GM18951 (cell line): ENCODE measurements at regions of chr11 and their contacts with region 1.

Region 1: GRCh38 chr11:45339729-45340519 is 53.8 kb upstream of the SYT13 start:
- POLR2A ChIP-seq: peak; percentile 18

Region 2: GRCh38 chr11:44936525-44936924 is 403.4 kb before region 1 on chr11:
- in situ Hi-C with region 1: loop called (anchors 25 kb)
- POLR2A ChIP-seq: no peak